Caco-2 (cell line): ENCODE measurements at regions of chr12 and their contacts with region 1.

Region 1: DNA sequence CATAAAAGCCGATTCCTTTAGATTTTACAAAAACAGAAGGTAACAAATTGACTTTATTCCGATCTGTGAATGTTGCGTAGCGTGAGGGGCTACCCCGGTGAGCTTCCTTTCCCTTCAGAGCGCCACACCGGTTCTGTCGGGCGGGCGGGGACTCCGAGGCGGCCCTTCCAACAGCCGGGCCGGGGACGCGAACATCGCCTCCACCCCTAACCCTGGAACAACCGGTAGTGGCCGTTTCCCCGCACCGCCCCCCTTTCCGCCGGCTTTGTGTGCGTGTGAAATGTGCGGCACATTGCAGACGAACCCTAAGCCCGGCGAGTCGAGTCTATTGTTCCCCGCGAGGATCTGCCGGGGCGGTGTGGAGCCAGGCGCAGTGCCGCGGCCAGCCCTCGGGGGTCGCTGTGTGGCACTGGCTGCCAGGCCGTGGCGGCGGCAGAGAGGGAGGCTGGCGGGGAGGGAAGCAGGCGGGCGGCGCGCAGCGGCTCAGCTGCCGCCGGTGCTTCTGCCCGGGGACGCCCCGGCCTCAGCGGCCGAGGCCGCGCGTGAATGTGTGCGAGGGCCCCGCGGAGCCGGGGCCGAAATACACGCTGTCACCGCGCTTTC is 775 bp upstream of the ARID2 start:
- DNase-seq: peak; percentile 99
- H3K4me3 ChIP-seq: peak overlapping the region; percentile 51
- H3K4me3 Mint-ChIP-seq: peak overlapping the region; percentile 79
- H3K27ac Mint-ChIP-seq: peak overlapping the region; percentile 80
- H3K4me1 ChIP-seq: peaks cover 30% of the 10 kb centered on the region
- H3K4me1 Mint-ChIP-seq: peaks cover 9% of the 10 kb centered on the region
- H3K27me3 ChIP-seq: no peaks in the 10 kb centered on the region
- H3K27me3 Mint-ChIP-seq: no peaks in the 10 kb centered on the region
- CTCF ChIP-seq: peak; percentile 91 to 95

Region 2: DNA sequence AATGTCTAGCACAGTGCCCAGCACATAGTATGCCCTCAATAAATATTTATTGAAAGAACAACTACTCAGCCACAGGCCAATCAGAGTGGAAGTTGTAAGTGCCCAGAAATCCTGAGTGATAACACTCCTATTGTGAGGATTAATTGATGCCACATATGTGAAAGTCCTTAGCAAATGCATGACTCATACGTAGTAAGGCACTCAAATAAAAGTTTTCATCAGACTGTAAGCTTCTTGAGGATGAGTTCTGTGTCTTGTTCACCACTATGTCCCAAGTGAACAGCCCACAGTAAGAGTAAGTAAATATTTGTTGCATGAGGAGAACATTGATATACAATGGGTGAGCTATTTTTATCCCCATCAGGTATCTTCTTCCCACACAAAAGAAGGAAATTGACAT is 537.5 kb before region 1 on chr12:
- CTCF ChIA-PET with region 1: no interaction called
- POLR2A ChIA-PET with region 1: no interaction called
- intact Hi-C with region 1: loop called (anchors 5 kb)
- DNase-seq: no peak
- H3K4me3 ChIP-seq: no peak overlapping the region
- H3K4me3 Mint-ChIP-seq: no peak overlapping the region
- H3K27ac Mint-ChIP-seq: peak overlapping the region; percentile 95
- H3K4me1 ChIP-seq: peaks cover 57% of the 10 kb centered on the region
- H3K4me1 Mint-ChIP-seq: peaks cover 44% of the 10 kb centered on the region
- H3K27me3 ChIP-seq: no peaks in the 10 kb centered on the region
- H3K27me3 Mint-ChIP-seq: no peaks in the 10 kb centered on the region
- CTCF ChIP-seq: no peak

Region 3: DNA sequence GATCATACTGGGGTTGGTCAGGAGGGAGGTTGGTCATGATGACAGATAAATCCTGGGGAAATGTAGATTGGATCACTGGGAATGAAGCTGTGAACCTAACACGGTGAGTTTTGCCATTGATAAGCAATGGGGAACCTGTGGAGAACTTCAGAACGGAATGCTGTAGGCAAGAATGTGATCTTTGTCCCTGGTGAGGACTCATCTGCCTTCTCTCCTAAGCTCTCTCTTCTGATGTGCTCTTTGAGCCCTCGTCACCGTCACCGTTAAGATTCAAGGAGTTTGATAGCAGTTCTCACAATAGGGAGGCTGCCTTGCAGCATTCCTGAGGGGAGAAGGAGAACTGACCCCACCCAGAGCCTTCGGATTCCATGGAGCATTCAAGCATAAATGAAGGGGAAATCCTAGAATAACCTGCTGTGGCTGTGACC is 295.3 kb before region 1 on chr12:
- CTCF ChIA-PET with region 1: no interaction called
- POLR2A ChIA-PET with region 1: no interaction called
- intact Hi-C with region 1: loop called (anchors 1 kb)
- DNase-seq: peak; percentile 90 to 96
- H3K4me3 ChIP-seq: no peak overlapping the region
- H3K4me3 Mint-ChIP-seq: peak overlapping the region; percentile 59
- H3K27ac Mint-ChIP-seq: peak overlapping the region; percentile 97
- H3K4me1 ChIP-seq: peaks cover 48% of the 10 kb centered on the region
- H3K4me1 Mint-ChIP-seq: peaks cover 44% of the 10 kb centered on the region
- H3K27me3 ChIP-seq: no peaks in the 10 kb centered on the region
- H3K27me3 Mint-ChIP-seq: no peaks in the 10 kb centered on the region
- CTCF ChIP-seq: no peak

Region 4: DNA sequence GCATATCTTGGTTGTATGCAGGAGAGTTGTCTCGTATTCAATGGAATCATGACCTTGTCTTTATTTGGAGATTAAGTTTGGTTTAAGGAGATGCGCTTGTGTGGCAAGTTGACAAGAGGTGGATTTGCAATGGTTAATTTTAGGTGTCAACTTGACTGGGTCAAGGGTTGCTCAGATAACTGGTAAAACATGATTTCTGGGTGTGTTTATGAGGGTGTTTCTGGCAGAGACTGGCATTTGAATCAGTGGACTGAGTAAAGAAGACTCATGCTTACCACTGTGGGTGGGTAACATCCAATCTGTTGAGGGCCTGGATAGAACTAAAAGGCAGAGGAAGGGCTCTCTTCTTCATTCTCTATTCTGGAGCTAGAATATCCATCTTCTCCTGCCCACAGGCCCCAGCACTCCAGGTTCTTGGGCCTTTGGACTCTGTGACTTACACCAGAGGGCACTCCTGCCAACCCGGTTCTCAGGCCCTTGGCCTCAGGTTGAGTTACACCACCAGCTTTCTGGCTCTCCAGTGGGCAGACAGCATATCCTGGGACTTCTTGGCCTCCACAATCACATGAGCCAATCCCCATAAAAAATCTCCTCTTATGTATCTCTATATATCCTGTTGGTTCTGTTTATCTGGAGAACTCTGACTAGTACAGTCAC is 140.7 kb before region 1 on chr12:
- CTCF ChIA-PET with region 1: interaction called, 5 read pairs
- POLR2A ChIA-PET with region 1: interaction called, 5 read pairs
- intact Hi-C with region 1: loop called (anchors 1 kb)
- DNase-seq: no peak
- H3K4me3 ChIP-seq: no peak overlapping the region
- H3K4me3 Mint-ChIP-seq: no peak overlapping the region
- H3K27ac Mint-ChIP-seq: no peak overlapping the region
- H3K4me1 ChIP-seq: peaks cover 15% of the 10 kb centered on the region
- H3K4me1 Mint-ChIP-seq: peaks cover 22% of the 10 kb centered on the region
- H3K27me3 ChIP-seq: no peaks in the 10 kb centered on the region
- H3K27me3 Mint-ChIP-seq: no peaks in the 10 kb centered on the region
- CTCF ChIP-seq: no peak

Region 5: DNA sequence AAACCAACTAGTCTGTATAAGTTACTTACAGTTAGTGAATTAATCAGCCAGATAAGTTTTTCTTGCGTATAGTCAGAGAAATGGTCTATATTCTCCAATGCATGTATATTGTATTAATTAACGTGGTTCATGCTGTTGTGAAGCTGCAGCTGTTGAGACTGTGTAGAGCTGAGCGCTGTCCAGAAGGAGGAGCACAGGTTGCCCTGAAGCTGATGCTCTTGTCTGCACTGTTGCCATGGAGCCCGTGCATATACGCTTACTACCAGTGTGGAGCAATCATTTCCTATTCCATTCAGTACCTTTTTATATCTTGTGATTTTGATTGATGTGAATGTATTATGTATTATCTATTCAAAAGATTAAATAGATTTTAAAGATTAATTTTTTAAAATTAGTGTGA is 73.5 kb before region 1 on chr12:
- CTCF ChIA-PET with region 1: interaction called, 10 read pairs
- POLR2A ChIA-PET with region 1: no interaction called
- intact Hi-C with region 1: loop called (anchors 1 kb)
- DNase-seq: peak; percentile 64 to 74
- H3K4me3 ChIP-seq: no peak overlapping the region
- H3K4me3 Mint-ChIP-seq: no peak overlapping the region
- H3K27ac Mint-ChIP-seq: no peak overlapping the region
- H3K4me1 ChIP-seq: no peaks in the 10 kb centered on the region
- H3K4me1 Mint-ChIP-seq: no peaks in the 10 kb centered on the region
- H3K27me3 ChIP-seq: no peaks in the 10 kb centered on the region
- H3K27me3 Mint-ChIP-seq: no peaks in the 10 kb centered on the region
- CTCF ChIP-seq: peak; percentile 28 to 71

Region 6: GRCh38 chr12:45745861-45746277 is 17.1 kb after region 1 on chr12:
- CTCF ChIA-PET with region 1: no interaction called
- POLR2A ChIA-PET with region 1: interaction called, 4 read pairs
- intact Hi-C with region 1: loop called (anchors 2 kb)
- DNase-seq: no peak
- H3K4me3 ChIP-seq: no peak overlapping the region
- H3K4me3 Mint-ChIP-seq: no peak overlapping the region
- H3K27ac Mint-ChIP-seq: no peak overlapping the region
- H3K4me1 ChIP-seq: no peaks in the 10 kb centered on the region; the same call in 1 of the 2 replicates
- H3K4me1 Mint-ChIP-seq: peaks cover 9% of the 10 kb centered on the region
- H3K27me3 ChIP-seq: no peaks in the 10 kb centered on the region
- H3K27me3 Mint-ChIP-seq: no peaks in the 10 kb centered on the region
- CTCF ChIP-seq: peak; percentile 23 to 36